Caco-2 (cell line): ENCODE measurements at regions of chr6 and their contacts with region 1.

Region 1: GRCh38 chr6:53634184-53634631 is 31.3 kb downstream of the KLHL31 start:
- DNase-seq: peak in 1 of 2 experiments; percentile 65
- H3K4me3 ChIP-seq: no peak overlapping the region
- H3K4me3 Mint-ChIP-seq: peak overlapping the region; percentile 62
- H3K27ac Mint-ChIP-seq: peak overlapping the region; percentile 96
- H3K4me1 ChIP-seq: peaks cover 47% of the 10 kb centered on the region
- H3K4me1 Mint-ChIP-seq: peaks cover 27% of the 10 kb centered on the region
- H3K27me3 ChIP-seq: no peaks in the 10 kb centered on the region
- H3K27me3 Mint-ChIP-seq: no peaks in the 10 kb centered on the region
- CTCF ChIP-seq: no peak

Region 2: GRCh38 chr6:53216301-53216700 is 417.9 kb before region 1 on chr6:
- CTCF ChIA-PET with region 1: no interaction called
- POLR2A ChIA-PET with region 1: no interaction called
- intact Hi-C with region 1: no loop called
- DNase-seq: no peak
- H3K4me3 ChIP-seq: no peak overlapping the region
- H3K4me3 Mint-ChIP-seq: no peak overlapping the region
- H3K27ac Mint-ChIP-seq: no peak overlapping the region
- H3K4me1 ChIP-seq: no peaks in the 10 kb centered on the region
- H3K4me1 Mint-ChIP-seq: no peaks in the 10 kb centered on the region
- H3K27me3 ChIP-seq: no peaks in the 10 kb centered on the region
- H3K27me3 Mint-ChIP-seq: no peaks in the 10 kb centered on the region
- CTCF ChIP-seq: no peak

Region 3: DNA sequence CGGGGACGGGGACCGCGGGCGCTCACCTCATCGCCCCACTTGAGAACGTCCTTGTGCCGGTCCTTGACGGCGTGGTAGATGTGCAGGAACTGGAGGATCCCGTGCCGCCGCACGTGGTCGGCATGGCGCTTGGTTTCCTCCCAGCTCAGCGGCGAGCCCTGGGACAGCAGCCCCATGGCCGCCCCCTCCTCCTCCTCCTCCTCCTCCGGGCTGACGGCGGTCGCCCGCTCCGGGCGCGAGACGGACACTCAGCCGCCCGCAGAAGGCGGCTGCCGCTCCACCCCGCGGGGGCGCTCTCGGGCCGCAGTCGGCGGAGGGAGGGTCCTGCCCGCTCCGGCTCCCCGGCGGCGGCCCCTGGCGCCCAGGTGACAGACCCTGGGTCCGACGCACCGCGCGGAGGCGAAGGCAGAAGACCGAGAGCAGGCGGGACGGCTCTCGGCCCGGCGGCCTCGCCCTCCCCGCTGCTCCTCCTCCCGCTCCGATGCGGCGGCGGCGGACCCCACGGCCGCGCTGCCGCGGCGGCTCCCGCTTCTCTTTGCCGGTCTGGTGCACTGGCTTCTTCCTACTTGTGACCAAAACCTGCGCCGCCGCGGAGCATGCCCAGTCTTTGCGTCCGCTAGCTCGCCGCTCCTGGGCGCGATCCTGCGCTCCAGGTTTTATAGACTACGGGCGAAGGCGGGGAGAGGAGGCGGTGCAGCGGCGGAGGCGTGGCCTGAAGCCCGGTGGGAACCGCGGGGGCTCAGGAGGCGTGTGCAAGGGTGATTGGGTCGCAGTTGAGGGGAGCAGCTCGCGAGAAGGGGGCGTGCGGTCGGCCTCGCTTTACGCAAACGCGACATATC is 89.5 kb before region 1 on chr6 and contains the start of gene GCLC:
- CTCF ChIA-PET with region 1: interaction called, 4 read pairs
- POLR2A ChIA-PET with region 1: interaction called, 3 read pairs
- intact Hi-C with region 1: loop called (anchors 1 kb)
- DNase-seq: peak; percentile 93 to 94
- H3K4me3 ChIP-seq: peak within 1 kb of the TSS; percentile 98
- H3K4me3 Mint-ChIP-seq: peak within 1 kb of the TSS; percentile 98
- H3K27ac Mint-ChIP-seq: peak within 1 kb of the TSS; percentile 94
- H3K4me1 ChIP-seq: peaks cover 14% of the 10 kb centered on the region
- H3K4me1 Mint-ChIP-seq: peaks cover 19% of the 10 kb centered on the region
- H3K27me3 ChIP-seq: no peaks in the 10 kb centered on the region
- H3K27me3 Mint-ChIP-seq: no peaks in the 10 kb centered on the region
- CTCF ChIP-seq: peak; percentile 42 to 75
- total RNA-seq, gene GCLC: 70.1 and 88.9 TPM in 2 replicates

Region 4: GRCh38 chr6:53605543-53606235 is 28.5 kb before region 1 on chr6:
- CTCF ChIA-PET with region 1: no interaction called
- POLR2A ChIA-PET with region 1: no interaction called
- intact Hi-C with region 1: loop called (anchors 1 kb)
- DNase-seq: peak; percentile 48 to 55
- H3K4me3 ChIP-seq: no peak overlapping the region
- H3K4me3 Mint-ChIP-seq: peak overlapping the region; percentile 38
- H3K27ac Mint-ChIP-seq: peak overlapping the region; percentile 87
- H3K4me1 ChIP-seq: peaks cover 26% of the 10 kb centered on the region
- H3K4me1 Mint-ChIP-seq: peaks cover 27% of the 10 kb centered on the region
- H3K27me3 ChIP-seq: no peaks in the 10 kb centered on the region
- H3K27me3 Mint-ChIP-seq: no peaks in the 10 kb centered on the region
- CTCF ChIP-seq: no peak

Region 5: GRCh38 chr6:53701333-53702218 is 67.4 kb after region 1 on chr6:
- CTCF ChIA-PET with region 1: no interaction called
- POLR2A ChIA-PET with region 1: no interaction called
- intact Hi-C with region 1: no loop called
- DNase-seq: no peak
- H3K4me3 ChIP-seq: no peak overlapping the region
- H3K4me3 Mint-ChIP-seq: no peak overlapping the region
- H3K27ac Mint-ChIP-seq: no peak overlapping the region
- H3K4me1 ChIP-seq: no peaks in the 10 kb centered on the region
- H3K4me1 Mint-ChIP-seq: no peaks in the 10 kb centered on the region
- H3K27me3 ChIP-seq: no peaks in the 10 kb centered on the region
- H3K27me3 Mint-ChIP-seq: no peaks in the 10 kb centered on the region
- CTCF ChIP-seq: no peak

Region 6: DNA sequence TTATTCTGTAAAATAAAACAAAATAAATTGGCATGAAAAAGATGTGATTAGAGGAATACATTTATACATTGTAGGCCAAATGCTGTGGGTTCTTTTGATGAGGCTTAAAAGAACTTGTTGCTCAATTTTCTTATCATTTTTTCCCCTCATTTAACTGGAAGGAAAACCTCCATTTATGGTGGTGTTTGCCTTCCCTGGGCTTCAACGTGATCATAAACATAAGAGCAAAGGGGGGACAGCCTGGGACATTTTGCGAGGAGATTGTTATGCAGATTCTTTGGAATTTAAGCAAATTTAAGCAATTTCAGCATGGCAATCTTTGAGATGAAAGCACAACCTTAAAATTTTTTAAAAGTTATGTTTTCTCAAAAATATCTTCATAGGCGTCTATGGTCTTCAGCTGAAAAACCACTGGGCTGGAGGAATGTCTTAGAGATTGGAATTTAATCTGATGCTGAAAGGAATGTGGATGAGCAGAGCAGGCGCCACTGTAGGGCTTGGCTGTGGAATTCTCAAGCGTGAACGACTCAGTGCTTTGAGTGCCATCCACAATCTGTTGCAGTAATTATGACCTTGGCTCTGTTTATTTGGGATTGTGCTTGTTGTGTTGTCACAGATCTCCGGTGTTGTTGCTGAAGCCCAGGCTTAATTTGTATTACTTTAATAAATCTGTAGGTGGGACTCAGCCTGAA is 327.6 kb after region 1 on chr6:
- CTCF ChIA-PET with region 1: no interaction called
- POLR2A ChIA-PET with region 1: no interaction called
- intact Hi-C with region 1: no loop called
- DNase-seq: peak; percentile 70 to 85
- H3K4me3 ChIP-seq: no peak overlapping the region
- H3K4me3 Mint-ChIP-seq: peak overlapping the region; percentile 60
- H3K27ac Mint-ChIP-seq: peak overlapping the region; percentile 91
- H3K4me1 ChIP-seq: peaks cover 41% of the 10 kb centered on the region
- H3K4me1 Mint-ChIP-seq: peaks cover 12% of the 10 kb centered on the region
- H3K27me3 ChIP-seq: no peaks in the 10 kb centered on the region
- H3K27me3 Mint-ChIP-seq: no peaks in the 10 kb centered on the region
- CTCF ChIP-seq: no peak